H1 (cell line): ENCODE measurements at regions of chr17 and their contacts with region 1.

Region 1: GRCh38 chr17:7280519-7281429 is 744 bp upstream of the SLC2A4 start:
- DNase-seq: peak; percentile 87 to 97
- H3K4me3 ChIP-seq: peak overlapping the region; percentile 14 to 77 (median 61)
- H3K27ac ChIP-seq: no peak overlapping the region
- H3K4me1 ChIP-seq: peaks cover 0 to 20% (median 8%) of the 10 kb centered on the region in 4 experiments; a peak in 5 of 7 replicates
- H3K27me3 ChIP-seq: peaks cover 0 to 13% (median 7%) of the 10 kb centered on the region in 4 experiments; a peak in 6 of 7 replicates
- CTCF ChIP-seq: peak; percentile 94 to 100 (median 97)
- EP300 ChIP-seq: peak in 1 of 2 experiments; percentile 10; a peak in 1 of 3 replicates
- POLR2A ChIP-seq: peak in 1 of 2 experiments; percentile 79; a peak in 2 of 3 replicates
- RAD21 ChIP-seq: peak; percentile 95 to 96

Region 2: DNA sequence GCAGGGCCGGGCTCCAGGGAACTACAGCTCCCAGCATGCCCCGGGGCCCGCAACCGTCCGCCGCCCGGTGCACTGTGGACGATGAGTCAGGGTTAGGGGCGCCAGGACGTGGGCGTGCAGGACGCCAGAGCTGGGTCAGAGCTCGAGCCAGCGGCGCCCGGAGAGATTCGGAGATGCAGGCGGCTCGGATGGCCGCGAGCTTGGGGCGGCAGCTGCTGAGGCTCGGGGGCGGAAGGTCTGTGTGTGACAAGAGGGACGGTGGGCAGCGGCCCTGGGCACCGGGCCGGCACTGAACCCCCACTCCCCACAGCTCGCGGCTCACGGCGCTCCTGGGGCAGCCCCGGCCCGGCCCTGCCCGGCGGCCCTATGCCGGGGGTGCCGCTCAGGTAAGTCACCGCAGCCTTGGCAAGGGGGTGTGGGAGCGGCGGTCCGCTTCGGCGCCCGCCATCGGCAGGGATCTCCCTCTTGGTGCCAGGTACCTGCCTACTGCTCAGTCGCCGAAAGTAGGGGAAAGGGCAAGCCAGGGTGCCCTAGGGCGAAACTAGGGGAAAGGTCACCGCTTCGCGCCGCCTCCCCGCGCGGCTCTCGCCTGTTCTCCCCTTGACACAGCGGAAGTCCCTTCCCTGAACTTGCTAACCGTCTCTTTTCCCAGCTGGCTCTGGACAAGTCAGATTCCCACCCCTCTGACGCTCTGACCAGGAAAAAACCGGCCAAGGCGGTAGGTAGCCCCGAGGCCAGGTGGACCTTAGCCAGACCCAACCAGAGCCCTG is 60.8 kb before region 1 on chr17 and contains the starts of genes ACADVL and DLG4:
- CTCF ChIA-PET with region 1: interaction called, 4 read pairs
- POLR2A ChIA-PET with region 1: interaction called, 14 read pairs
- DNase-seq: peak in 1 of 2 experiments; percentile 90
- H3K4me3 ChIP-seq: peak within 1 kb of the TSS; percentile 76 to 93 (median 86)
- H3K27ac ChIP-seq: peak within 1 kb of the TSS; percentile 49
- H3K4me1 ChIP-seq: peaks cover 6 to 36% (median 20%) of the 10 kb centered on the region in 4 experiments
- H3K27me3 ChIP-seq: no peaks in the 10 kb centered on the region
- CTCF ChIP-seq: no peak
- EP300 ChIP-seq: no peak
- POLR2A ChIP-seq: peak; percentile 79 to 90
- RAD21 ChIP-seq: no peak
- total RNA-seq, gene ACADVL: 169 and 181 TPM in 2 replicates
- total RNA-seq, gene DLG4: 43.1 and 45.9 TPM in 2 replicates

Region 3: DNA sequence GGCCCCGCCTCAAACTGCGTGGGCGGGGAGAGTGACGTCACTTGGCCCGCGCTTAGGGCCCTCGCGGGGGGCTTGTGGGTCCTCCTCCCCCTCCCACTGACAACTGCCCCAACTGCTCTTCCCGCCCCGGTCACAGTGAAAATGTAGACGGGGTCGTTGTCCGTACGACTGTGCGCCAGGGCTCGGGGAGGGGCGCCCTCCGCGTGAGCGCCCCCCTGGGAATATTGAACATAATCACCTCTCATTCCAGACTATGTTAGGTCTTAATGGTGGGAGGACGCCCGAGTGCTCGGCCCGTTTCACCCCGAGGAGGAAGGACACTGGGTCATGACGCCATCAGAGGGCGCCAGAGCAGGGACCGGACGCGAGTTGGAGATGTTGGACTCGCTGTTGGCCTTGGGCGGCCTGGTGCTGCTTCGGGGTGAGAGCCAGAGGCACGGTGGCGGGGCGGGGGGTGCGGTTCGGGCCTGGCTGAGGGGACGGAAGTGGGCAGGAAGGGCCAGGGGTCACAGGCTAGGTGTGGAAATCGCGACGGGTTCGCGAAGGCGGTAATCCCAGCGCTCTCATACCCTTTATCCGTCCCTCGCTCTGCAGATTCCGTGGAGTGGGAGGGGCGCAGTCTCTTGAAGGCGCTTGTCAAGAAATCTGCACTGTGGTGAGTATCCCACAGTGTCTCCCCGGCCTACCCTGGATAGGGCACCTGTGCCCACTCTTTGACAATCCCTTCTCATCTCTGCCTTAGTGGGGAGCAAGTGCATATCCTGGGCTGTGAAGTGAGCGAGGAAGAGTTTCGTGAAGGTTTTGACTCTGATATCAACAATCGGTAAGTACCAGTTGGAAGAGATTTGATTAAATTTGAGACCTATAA is 28.4 kb before region 1 on chr17 and contains the start of gene ELP5:
- CTCF ChIA-PET with region 1: interaction called, 7 read pairs
- POLR2A ChIA-PET with region 1: interaction called, 69 read pairs
- DNase-seq: peak in 1 of 2 experiments; percentile 97
- H3K4me3 ChIP-seq: peak within 1 kb of the TSS; percentile 58 to 84 (median 79)
- H3K27ac ChIP-seq: peak within 1 kb of the TSS; percentile 97
- H3K4me1 ChIP-seq: peaks cover 0 to 9% (median 4%) of the 10 kb centered on the region in 4 experiments; a peak in 6 of 7 replicates
- H3K27me3 ChIP-seq: no peaks in the 10 kb centered on the region
- CTCF ChIP-seq: peak in 2 of 3 experiments; percentile 20 to 28; a peak in 2 of 4 replicates
- EP300 ChIP-seq: no peak
- POLR2A ChIP-seq: peak in 1 of 2 experiments; percentile 91; a peak in 2 of 3 replicates
- RAD21 ChIP-seq: peak in 1 of 2 experiments; percentile 11; a peak in 1 of 4 replicates
- total RNA-seq, gene ELP5: 75.4 and 78.1 TPM in 2 replicates

Region 4: GRCh38 chr17:7266784-7267183 is 14.0 kb before region 1 on chr17:
- CTCF ChIA-PET with region 1: interaction called, 11 read pairs
- POLR2A ChIA-PET with region 1: interaction called, 40 read pairs
- DNase-seq: no peak
- H3K4me3 ChIP-seq: no peak overlapping the region
- H3K27ac ChIP-seq: no peak overlapping the region
- H3K4me1 ChIP-seq: peaks cover 0 to 8% (median 4%) of the 10 kb centered on the region in 4 experiments; a peak in 4 of 7 replicates
- H3K27me3 ChIP-seq: no peaks in the 10 kb centered on the region
- CTCF ChIP-seq: no peak
- EP300 ChIP-seq: no peak
- POLR2A ChIP-seq: no peak
- RAD21 ChIP-seq: no peak

Region 5: DNA sequence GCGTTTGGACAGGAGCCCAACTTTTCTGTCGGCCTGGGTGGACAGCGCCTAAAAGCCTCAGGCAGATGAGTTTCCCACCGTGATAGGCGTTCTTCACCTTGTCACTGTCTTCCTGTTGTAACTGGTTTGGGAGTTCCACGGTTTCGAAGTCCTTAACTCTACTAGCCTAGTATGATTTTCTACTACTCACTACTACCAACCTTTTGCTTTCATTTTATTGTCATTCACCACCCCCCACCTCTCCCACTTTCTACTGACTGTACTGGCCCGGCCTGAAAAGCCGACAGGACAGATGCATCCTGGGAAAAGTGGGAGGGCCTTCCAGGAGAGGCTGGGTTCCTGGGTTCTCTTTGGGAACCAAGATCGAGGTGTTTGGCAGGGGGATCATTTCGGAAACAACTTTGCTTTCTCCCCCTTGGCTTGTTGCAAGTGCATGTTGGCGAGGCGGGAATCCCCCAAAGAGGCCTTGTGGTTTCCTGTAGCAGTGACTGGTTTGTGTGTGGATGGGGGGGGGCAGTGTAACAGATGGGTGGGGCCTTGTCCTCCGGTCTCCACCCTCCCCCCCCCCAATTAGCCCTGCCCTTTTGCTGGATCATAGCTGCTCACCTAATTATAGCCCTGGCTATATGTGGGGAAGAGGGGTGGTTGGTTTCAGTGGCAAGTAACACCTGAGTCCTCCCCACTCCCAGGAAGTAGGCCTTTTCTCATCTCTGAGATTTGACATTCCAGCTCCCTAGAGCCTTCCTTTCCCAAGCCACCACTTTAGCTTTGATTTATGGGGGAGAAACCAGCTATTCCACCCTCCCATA is 28.1 kb after region 1 on chr17:
- CTCF ChIA-PET with region 1: interaction called, 7 read pairs
- POLR2A ChIA-PET with region 1: interaction called, 37 read pairs
- DNase-seq: peak in 1 of 2 experiments; percentile 75
- H3K4me3 ChIP-seq: peak overlapping the region; percentile 87 to 97 (median 90)
- H3K27ac ChIP-seq: peak overlapping the region; percentile 92
- H3K4me1 ChIP-seq: peaks cover 0 to 14% (median 6%) of the 10 kb centered on the region in 4 experiments; a peak in 5 of 7 replicates
- H3K27me3 ChIP-seq: no peaks in the 10 kb centered on the region
- CTCF ChIP-seq: no peak
- EP300 ChIP-seq: no peak
- POLR2A ChIP-seq: peak; percentile 50 to 66
- RAD21 ChIP-seq: no peak